ENCODE measurements at regions of chr4 and their contacts with region 1.

Region 1: GRCh38 chr4:184384056-184384809 is 90.1 kb downstream of the IRF2 start:
- DNase-seq: no peak
- ATAC-seq: no peak
- H3K4me3 ChIP-seq: no peak overlapping the region
- H3K27ac ChIP-seq: no peak overlapping the region
- H3K4me1 ChIP-seq: peaks cover 30 to 54% of the 10 kb centered on the region in 2 experiments
- H3K27me3 ChIP-seq: no peaks in the 10 kb centered on the region
- CTCF ChIP-seq: no peak
- EP300 ChIP-seq: no peak
- POLR2A ChIP-seq: no peak
- RAD21 ChIP-seq: no peak

Region 2: GRCh38 chr4:184318852-184319251 is 65.4 kb before region 1 on chr4:
- CTCF ChIA-PET with region 1: no interaction called
- POLR2A ChIA-PET with region 1: no interaction called
- in situ Hi-C with region 1: no loop called
- intact Hi-C with region 1: no loop called
- DNase-seq: no peak
- ATAC-seq: no peak
- H3K4me3 ChIP-seq: no peak overlapping the region
- H3K27ac ChIP-seq: no peak overlapping the region
- H3K4me1 ChIP-seq: no peaks in the 10 kb centered on the region
- H3K27me3 ChIP-seq: no peaks in the 10 kb centered on the region
- CTCF ChIP-seq: no peak
- EP300 ChIP-seq: no peak
- POLR2A ChIP-seq: no peak
- RAD21 ChIP-seq: no peak

Region 3: GRCh38 chr4:184335520-184335919 is 48.7 kb before region 1 on chr4:
- CTCF ChIA-PET with region 1: no interaction called
- POLR2A ChIA-PET with region 1: no interaction called
- in situ Hi-C with region 1: no loop called
- intact Hi-C with region 1: loop called (anchors 5 kb)
- DNase-seq: no peak
- ATAC-seq: no peak
- H3K4me3 ChIP-seq: no peak overlapping the region
- H3K27ac ChIP-seq: no peak overlapping the region
- H3K4me1 ChIP-seq: peaks cover 3 to 4% of the 10 kb centered on the region in 2 experiments; a peak in 2 of 5 replicates
- H3K27me3 ChIP-seq: no peaks in the 10 kb centered on the region
- CTCF ChIP-seq: no peak
- EP300 ChIP-seq: no peak
- POLR2A ChIP-seq: no peak
- RAD21 ChIP-seq: no peak

Region 4: DNA sequence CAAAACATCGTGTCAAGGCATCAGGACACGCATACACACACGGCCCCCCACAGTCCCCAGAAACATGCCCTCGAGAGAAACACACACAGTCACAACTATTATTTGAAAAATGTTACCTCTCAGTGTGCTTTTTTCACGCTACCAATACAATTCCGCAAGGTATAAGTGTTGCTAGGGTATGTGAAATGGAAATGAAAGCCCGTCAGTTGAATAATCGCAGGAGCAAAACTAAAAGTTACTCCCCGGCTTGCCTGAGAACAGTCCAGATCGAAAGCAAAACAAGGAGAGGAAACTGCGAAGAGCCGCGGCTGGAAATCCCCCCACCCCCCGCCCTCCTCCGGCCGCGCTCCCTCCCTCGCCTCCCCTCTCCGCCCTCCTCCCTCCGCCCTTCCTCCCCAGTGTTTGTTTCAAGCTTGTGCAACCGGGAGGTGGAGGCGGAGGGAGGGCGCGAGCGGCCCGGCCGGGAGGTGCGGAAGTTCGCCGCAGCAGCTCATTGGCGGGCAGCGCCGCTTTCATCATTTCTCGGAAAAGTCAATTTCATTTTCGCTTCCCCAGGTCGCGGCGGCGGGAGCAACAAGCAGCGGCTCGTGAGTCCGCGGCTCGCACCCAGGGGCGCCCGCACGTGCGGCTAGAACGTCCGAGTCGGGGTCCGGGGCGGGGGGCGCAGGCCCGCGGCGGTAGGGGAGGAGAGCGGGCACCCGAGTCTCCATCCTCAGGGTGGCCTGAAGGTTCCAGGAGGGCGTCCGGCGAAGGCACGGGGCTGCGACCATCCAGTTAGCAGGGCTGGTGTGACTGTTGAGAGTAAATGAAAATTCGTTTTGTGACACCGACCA is 90.2 kb after region 1 on chr4 and contains the start of gene IRF2:
- CTCF ChIA-PET with region 1: no interaction called
- POLR2A ChIA-PET with region 1: no interaction called
- in situ Hi-C with region 1: no loop called
- intact Hi-C with region 1: loop called (anchors 1 kb)
- DNase-seq: peak; percentile 94 to 97 (median 96)
- ATAC-seq: peak; percentile 87
- H3K4me3 ChIP-seq: peak within 1 kb of the TSS; percentile 92
- H3K27ac ChIP-seq: peak within 1 kb of the TSS; percentile 93
- H3K4me1 ChIP-seq: peaks cover 21 to 23% of the 10 kb centered on the region in 2 experiments
- H3K27me3 ChIP-seq: no peaks in the 10 kb centered on the region
- CTCF ChIP-seq: peak in 2 of 3 experiments; percentile 5 to 8; a peak in 1 of 6 replicates
- EP300 ChIP-seq: peak; percentile 50
- POLR2A ChIP-seq: peak; percentile 91
- RAD21 ChIP-seq: no peak
- polyA plus RNA-seq, gene IRF2: 8.8 to 17.1 TPM

Measured in K562 (cell line).